Common myeloid progenitor, CD34-positive (primary cell): ENCODE measurements at regions of chr3 and their contacts with region 1.

Region 1: DNA sequence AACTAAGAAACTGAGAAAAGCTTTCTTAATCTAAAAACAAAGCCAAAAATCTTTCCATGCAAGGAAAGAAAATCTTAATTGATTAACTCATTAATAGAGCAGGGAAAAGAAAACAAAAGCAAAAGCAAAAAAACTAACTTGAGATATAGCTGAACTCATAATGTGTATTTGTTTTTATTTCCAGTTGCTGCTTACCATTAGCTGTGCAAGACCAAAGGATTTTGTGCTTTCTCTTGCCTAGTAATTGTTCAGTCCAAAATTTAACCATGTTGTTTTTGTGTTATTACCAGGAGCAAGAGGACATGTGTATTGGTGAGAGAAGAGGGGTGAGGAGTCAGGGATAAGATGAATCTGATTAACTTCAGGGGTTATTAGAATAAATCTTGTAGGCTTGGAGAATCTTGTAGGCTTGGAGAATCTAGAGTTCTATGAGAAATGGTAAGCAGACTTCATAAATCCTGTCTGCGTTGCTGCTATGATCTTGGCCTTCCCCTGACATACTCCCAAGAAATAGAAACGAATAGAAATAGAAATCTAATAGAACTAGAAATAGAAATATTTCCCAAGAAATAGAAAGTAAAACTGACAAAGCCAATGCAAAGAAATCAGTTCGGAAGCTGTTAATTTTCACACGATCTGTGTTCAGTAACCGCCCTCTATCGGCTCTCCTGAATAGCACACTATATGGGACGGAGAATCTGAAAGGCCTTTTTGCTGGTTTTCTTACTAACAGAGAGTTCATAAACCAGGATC is 72.6 kb upstream of the TNFSF10 start:
- DNase-seq: peak; percentile 69 to 82 (median 81)
- H3K4me3 ChIP-seq: peak overlapping the region in 6 of 7 experiments; percentile 38 to 72 (median 42)
- H3K27ac ChIP-seq: no peak overlapping the region
- H3K4me1 ChIP-seq: peaks cover 0 to 51% (median 37%) of the 10 kb centered on the region in 4 experiments
- H3K27me3 ChIP-seq: no peaks in the 10 kb centered on the region

Region 2: GRCh38 chr3:172461530-172462138 is 134.2 kb before region 1 on chr3:
- CTCF ChIA-PET with region 1: interaction called, 24 read pairs
- POLR2A ChIA-PET with region 1: interaction called, 3 read pairs
- DNase-seq: peak; percentile 39 to 57 (median 46)
- H3K4me3 ChIP-seq: no peak overlapping the region
- H3K27ac ChIP-seq: no peak overlapping the region
- H3K4me1 ChIP-seq: no peaks in the 10 kb centered on the region
- H3K27me3 ChIP-seq: no peaks in the 10 kb centered on the region

Region 3: DNA sequence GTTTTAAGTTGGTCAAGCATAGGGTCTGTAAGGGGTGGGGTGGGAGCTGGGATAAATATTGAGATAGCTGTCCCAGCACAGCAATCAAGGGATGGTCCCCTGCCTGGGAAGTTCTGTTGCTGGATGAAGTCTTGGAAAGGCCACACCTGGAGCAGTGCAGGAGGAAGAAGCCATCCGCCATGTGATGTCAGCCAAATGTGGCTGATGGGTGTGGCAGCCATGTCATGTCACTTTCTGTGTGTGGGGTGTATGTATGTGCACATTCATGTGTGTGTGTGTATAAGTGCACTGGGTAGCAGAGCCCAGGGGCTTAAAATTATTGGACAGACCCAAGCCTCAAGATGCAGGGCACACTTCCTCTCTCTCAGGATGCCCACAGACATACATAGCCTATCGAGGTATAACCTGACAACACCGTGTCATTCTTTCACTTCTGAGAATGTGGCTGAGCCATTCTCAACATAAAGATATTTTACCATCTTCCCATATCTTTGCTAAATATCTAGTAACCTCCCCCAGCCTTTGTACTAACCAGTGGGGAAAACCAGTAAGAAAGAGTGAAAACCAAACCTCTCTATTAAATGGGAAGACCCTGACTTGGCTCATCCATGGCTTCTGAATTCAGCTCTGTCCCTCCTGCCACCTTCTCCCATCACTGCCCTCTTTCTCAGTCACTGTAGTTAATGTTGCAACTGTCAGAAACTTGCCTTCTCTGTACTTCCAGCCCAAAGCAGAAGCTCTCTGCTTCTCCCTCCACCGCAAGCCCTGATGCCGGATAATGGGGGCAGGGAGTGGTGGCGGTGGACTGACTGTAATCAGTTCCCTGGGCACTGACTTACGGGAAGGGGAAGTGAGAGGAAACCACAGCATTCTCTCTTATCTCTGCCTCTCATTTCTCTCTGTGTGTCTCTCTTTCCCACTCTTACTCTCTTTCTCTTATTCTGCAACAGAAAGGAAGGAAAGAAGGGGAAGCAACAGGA is 83.7 kb before region 1 on chr3:
- CTCF ChIA-PET with region 1: interaction called, 25 read pairs
- POLR2A ChIA-PET with region 1: interaction called, 3 read pairs
- DNase-seq: peak; percentile 84 to 94 (median 93)
- H3K4me3 ChIP-seq: peak overlapping the region in 5 of 7 experiments; percentile 3 to 42 (median 33)
- H3K27ac ChIP-seq: peak overlapping the region; percentile 5 to 40
- H3K4me1 ChIP-seq: peaks cover 29 to 65% (median 52%) of the 10 kb centered on the region in 4 experiments
- H3K27me3 ChIP-seq: no peaks in the 10 kb centered on the region

Region 4: DNA sequence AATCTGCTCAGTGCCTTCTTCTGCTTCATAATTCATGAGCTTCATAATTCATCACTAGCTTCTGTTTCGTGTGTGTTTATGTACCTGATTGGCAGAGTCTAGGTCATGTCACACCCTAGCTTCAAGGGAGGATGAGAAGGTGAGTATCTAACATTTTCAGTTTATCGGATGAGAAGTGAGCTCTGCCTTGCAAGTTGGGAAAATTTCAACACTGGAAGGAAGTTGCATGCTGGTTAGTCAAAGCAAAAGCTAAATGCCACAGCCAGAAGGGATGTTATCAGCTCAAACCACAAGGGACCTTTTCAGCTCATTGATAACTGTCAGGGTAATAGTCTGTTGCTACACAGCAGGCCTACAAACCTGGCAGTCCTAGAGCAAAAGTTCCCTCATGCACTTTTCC is 65.3 kb before region 1 on chr3:
- CTCF ChIA-PET with region 1: interaction called, 24 read pairs
- POLR2A ChIA-PET with region 1: interaction called, 3 read pairs
- DNase-seq: peak; percentile 47 to 85 (median 75)
- H3K4me3 ChIP-seq: peak overlapping the region in 2 of 7 experiments; percentile 29 to 32
- H3K27ac ChIP-seq: peak overlapping the region in 1 of 2 experiments; percentile 75
- H3K4me1 ChIP-seq: peaks cover 6 to 20% (median 14%) of the 10 kb centered on the region in 4 experiments
- H3K27me3 ChIP-seq: no peaks in the 10 kb centered on the region

Region 5: DNA sequence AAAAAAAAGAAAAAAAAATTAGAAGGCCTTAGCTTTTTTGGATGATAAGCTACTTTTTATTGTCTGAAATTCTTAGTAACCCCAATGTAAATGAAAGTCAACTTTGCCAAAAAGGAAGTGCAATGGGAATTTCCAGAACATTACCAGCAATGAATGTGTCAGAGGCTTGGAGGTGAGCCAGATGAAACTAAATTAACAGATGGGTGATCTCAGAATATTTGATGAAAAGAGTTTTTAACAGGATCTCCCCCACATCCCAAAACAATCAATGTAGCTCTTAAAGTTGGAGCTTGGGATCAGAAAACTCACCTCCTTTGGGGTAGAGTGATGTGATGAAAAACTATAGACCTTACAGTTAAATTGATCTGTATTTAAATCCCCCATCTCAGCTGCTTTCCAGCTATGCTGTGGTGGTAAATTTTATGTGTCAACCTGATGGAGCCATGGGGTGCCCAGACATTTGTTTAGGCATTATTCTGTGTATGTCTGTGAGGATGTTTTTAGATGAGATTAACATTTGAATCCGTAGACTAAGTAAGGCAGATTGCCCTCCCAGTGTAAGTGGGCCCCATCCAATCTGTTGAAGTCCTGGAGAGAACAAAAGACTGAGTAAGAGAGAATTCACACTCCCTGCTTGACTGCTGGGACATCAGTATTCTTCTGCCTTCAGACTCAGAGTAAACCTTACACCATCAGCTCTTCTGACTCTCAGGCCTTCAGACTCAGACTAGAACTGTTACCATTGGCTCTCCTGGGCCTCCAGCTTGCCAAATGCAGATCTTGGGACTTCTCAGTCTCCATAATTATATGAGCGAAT is 11.7 kb after region 1 on chr3:
- CTCF ChIA-PET with region 1: interaction called, 23 read pairs
- POLR2A ChIA-PET with region 1: no interaction called
- DNase-seq: peak; percentile 60 to 90 (median 86)
- H3K4me3 ChIP-seq: no peak overlapping the region
- H3K27ac ChIP-seq: no peak overlapping the region
- H3K4me1 ChIP-seq: peaks cover 0 to 4% (median 0%) of the 10 kb centered on the region in 4 experiments
- H3K27me3 ChIP-seq: no peaks in the 10 kb centered on the region